Mammary epithelial cell (primary cell): ENCODE measurements at regions of chr1 and their contacts with region 1.

Region 1: GRCh38 chr1:218345673-218346390 is 696 bp downstream of the TGFB2 start:
- DNase-seq: peak; percentile 75
- H3K4me3 ChIP-seq: peak overlapping the region; percentile 77 to 92 (median 81)
- H3K27ac ChIP-seq: peak overlapping the region; percentile 88
- H3K4me1 ChIP-seq: peaks cover 7% of the 10 kb centered on the region
- H3K27me3 ChIP-seq: no peaks in the 10 kb centered on the region
- CTCF ChIP-seq: peak in 1 of 2 donors; percentile 1

Region 2: DNA sequence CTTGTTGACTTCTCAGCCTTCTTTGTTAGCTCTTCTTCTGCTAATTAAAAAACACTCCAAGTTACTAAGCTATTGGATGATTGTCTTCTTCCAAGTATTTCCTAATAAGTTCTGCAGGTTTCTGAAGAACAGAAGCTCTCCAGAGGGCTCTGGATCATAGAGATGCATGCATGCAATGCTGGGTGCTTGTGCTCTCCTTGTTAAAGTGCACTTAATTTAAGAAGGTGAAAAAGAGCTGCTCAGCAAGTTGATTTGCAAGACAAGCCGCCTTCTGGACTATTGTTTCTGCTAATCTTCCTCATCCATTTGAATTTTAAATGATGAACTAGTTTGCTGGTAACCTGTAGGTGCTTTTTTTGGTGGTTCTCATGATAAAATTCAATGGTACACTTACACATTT is 44.6 kb before region 1 on chr1:
- CTCF ChIA-PET with region 1: no interaction called
- dilution Hi-C with region 1: no loop called
- in situ Hi-C with region 1: no loop called
- intact Hi-C with region 1: no loop called
- DNase-seq: no peak
- H3K4me3 ChIP-seq: no peak overlapping the region
- H3K27ac ChIP-seq: no peak overlapping the region
- H3K4me1 ChIP-seq: no peaks in the 10 kb centered on the region
- H3K27me3 ChIP-seq: no peaks in the 10 kb centered on the region
- CTCF ChIP-seq: no peak

Region 3: GRCh38 chr1:218330043-218330623 is 15.7 kb before region 1 on chr1:
- CTCF ChIA-PET with region 1: no interaction called
- dilution Hi-C with region 1: no loop called
- in situ Hi-C with region 1: no loop called
- intact Hi-C with region 1: no loop called
- DNase-seq: peak; percentile 18
- H3K4me3 ChIP-seq: no peak overlapping the region
- H3K27ac ChIP-seq: no peak overlapping the region
- H3K4me1 ChIP-seq: no peaks in the 10 kb centered on the region
- H3K27me3 ChIP-seq: no peaks in the 10 kb centered on the region
- CTCF ChIP-seq: peak; percentile 51

Region 4: DNA sequence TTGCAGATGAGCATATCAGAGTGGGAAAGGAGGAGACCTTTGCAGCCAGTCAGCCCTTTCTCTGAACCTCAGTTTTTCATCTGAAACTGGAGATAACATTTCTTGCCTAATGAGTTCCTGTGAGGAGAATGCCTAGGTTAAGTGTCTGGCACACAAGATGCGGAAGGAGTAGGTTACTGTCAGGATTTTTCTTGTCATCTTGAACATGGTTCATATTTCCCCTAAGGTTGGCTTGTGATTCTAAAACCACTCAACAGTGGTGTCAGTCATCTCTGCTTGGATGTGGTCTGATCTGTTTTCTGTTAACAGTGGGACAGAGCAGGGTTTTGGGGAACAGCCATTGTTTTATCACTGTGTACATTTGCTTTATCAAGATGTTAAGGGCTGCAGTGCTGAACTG is 69.9 kb after region 1 on chr1:
- CTCF ChIA-PET with region 1: no interaction called
- dilution Hi-C with region 1: no loop called
- in situ Hi-C with region 1: no loop called
- intact Hi-C with region 1: no loop called
- DNase-seq: no peak
- H3K4me3 ChIP-seq: no peak overlapping the region
- H3K27ac ChIP-seq: no peak overlapping the region
- H3K4me1 ChIP-seq: peaks cover 8% of the 10 kb centered on the region
- H3K27me3 ChIP-seq: no peaks in the 10 kb centered on the region
- CTCF ChIP-seq: no peak

Region 5: DNA sequence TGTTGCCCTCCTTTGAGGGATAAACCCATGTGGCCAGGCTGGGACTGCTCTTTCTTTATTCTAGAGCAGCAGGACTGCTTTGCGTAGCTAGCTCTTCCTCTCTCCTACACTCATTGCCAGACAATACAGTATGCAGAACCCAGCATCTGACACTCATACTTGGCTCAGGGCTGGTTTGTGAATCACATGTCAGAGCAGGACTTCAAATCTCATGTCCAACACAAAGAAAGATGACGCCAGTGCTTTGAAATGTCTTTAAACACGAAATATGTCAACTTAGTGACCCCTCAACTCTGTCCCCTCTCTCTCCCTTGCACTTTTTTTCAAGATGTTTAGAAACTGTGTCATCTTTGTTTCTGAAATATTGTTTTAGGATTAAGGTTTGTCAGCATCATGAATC is 134.3 kb after region 1 on chr1:
- CTCF ChIA-PET with region 1: no interaction called
- dilution Hi-C with region 1: no loop called
- in situ Hi-C with region 1: no loop called
- intact Hi-C with region 1: loop called (anchors 1 kb)
- DNase-seq: peak; percentile 92
- H3K4me3 ChIP-seq: no peak overlapping the region
- H3K27ac ChIP-seq: peak overlapping the region; percentile 93
- H3K4me1 ChIP-seq: peaks cover 54% of the 10 kb centered on the region
- H3K27me3 ChIP-seq: no peaks in the 10 kb centered on the region
- CTCF ChIP-seq: no peak

Region 6: GRCh38 chr1:218546309-218546708 is 200.5 kb after region 1 on chr1:
- CTCF ChIA-PET with region 1: no interaction called
- dilution Hi-C with region 1: no loop called
- in situ Hi-C with region 1: no loop called
- intact Hi-C with region 1: loop called (anchors 1 kb)
- DNase-seq: no peak
- H3K4me3 ChIP-seq: no peak overlapping the region
- H3K27ac ChIP-seq: no peak overlapping the region
- H3K4me1 ChIP-seq: no peaks in the 10 kb centered on the region
- H3K27me3 ChIP-seq: no peaks in the 10 kb centered on the region
- CTCF ChIP-seq: peak in 1 of 2 donors; percentile 32

Region 7: DNA sequence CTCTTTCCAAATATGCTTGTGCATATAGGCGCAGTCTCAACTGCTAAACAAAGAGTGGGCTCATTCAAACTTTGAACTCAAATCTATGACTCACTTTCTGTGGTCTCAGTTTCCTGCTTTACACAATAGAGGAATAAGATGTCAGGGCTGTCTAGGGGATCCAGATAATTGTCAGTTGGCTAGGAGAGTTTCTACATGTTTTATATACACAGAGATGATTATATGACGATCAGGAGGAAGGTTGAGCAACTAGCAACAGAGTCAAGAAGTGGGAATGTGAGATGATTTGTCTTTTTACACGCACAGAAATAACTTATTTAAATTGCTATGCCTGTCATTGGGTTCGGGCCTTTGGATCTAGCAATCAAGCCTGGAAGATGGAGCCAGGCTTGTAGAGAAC is 528.5 kb after region 1 on chr1:
- CTCF ChIA-PET with region 1: no interaction called
- dilution Hi-C with region 1: loop called (anchors 10 kb)
- in situ Hi-C with region 1: no loop called
- intact Hi-C with region 1: no loop called
- DNase-seq: peak; percentile 97
- H3K4me3 ChIP-seq: no peak overlapping the region
- H3K27ac ChIP-seq: peak overlapping the region; percentile 88
- H3K4me1 ChIP-seq: peaks cover 21% of the 10 kb centered on the region
- H3K27me3 ChIP-seq: no peaks in the 10 kb centered on the region
- CTCF ChIP-seq: no peak

Region 8: DNA sequence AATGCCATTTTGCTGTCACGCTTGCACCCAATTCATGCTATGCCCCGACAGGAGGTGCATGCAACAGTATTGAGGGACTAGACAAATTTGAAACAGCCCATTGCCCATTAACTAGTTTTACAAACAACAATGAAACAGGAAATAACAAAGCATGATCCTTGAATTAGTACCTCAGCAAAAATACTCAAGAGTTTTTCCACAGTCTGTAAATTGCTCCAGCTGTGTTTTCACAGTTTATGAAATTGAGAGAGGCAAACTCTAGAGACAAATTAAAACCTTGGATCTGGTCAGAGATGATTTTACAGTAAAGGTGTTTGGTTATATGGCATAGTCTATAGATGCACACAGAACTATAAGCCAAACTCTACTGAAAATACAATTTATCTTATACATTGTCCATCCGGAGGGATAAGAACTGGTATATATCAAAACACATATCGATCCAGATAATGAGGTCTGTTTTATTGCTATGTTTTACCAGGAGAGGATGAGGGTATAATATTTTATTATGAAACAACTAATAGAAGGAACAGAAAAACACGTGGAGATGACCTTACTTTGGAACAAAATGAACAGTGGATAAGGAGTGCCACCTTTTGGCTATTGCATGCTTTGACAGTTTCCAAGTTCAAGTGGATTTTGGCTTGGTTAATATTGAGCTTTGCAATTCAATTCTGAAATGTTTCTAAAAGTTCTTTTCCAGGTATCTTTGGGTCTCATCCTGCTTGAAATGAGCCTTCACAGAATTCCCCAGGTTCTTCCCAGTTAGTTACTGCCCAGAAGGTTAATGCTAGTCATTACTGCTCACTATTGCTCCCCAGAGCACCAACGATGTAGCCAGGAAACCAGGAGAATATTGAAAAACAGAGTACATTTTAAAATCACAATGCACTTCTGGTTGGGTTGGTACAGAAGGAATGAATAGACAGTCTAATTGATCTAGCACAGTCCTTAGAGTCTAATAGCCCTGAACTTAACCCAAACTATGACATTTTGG is 1221.4 kb after region 1 on chr1:
- CTCF ChIA-PET with region 1: no interaction called
- dilution Hi-C with region 1: no loop called
- in situ Hi-C with region 1: loop called in 1 of 2 experiments (anchors 25 kb)
- intact Hi-C with region 1: no loop called
- DNase-seq: peak; percentile 17
- H3K4me3 ChIP-seq: no peak overlapping the region
- H3K27ac ChIP-seq: no peak overlapping the region
- H3K4me1 ChIP-seq: no peaks in the 10 kb centered on the region
- H3K27me3 ChIP-seq: peaks cover 5% of the 10 kb centered on the region
- CTCF ChIP-seq: peak; percentile 55 to 67